ENCODE measurements at regions of chrX and their contacts with region 1.

Region 1: DNA sequence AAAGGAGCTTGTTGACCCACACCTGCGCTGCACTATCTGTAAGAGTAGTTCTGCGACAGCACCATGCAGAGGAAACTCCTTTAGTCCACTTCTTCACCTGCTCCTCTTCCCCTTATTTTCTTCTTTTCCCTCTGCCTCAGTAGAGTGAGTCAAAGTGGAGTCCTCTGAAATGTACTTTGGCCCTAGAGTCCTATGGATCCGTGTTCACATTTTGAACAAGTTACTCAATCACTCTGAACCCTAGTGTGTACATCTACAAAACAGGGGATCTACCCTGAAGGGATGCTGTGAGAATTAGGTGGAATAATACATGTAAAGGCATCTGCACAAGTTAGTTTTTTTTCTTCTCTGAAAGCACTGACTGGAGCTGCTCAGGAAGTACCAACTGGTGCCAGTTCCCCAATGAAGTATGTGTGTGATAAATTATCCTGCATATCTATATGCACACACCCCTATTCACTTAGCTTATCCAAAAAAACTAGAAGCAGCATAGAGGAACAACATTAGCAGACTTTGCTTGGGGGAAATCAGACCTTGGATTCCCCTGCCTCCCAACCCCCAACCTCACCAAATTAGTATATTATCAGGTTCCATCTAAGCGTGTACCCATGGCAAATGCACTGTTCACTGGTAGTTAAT is 118.5 kb upstream of the FAM9C start:
- DNase-seq: no peak
- H3K4me3 ChIP-seq: no peak overlapping the region
- H3K27ac ChIP-seq: no peak overlapping the region
- H3K4me1 ChIP-seq: peaks cover 7% of the 10 kb centered on the region
- H3K27me3 ChIP-seq: no peaks in the 10 kb centered on the region
- CTCF ChIP-seq: no peak
- EP300 ChIP-seq: no peak
- POLR2A ChIP-seq: no peak

Region 2: DNA sequence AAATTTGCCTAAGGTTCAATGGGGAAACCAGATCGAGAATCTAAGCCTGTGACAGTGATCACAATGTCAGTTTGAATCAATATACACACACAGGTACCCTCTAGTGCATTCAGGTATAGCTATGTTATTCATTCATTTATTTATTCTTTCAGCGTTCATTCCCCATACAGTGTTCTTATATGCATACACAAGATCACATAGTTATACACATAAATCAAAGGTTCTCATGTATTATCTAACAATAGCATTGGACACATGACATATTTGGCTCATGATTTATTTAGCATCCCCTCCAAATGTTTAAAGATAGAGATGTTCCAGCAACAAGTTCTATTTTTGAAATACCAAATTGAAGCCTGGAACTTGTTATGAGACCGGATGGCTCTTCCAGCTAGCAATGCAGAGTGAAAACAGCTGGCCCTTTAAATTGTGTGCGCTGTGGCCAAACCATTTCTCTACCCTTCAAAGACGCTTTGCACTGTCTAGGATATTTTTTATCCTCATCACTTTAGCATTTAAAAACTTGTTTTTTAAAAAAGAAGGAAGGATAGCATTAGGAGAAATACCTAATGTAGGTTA is 25.9 kb after region 1 on chrX:
- intact Hi-C with region 1: loop called in 1 of 4 experiments (anchors 1 kb)
- DNase-seq: no peak
- H3K4me3 ChIP-seq: no peak overlapping the region
- H3K27ac ChIP-seq: no peak overlapping the region
- H3K4me1 ChIP-seq: no peaks in the 10 kb centered on the region
- H3K27me3 ChIP-seq: no peaks in the 10 kb centered on the region
- CTCF ChIP-seq: no peak
- EP300 ChIP-seq: no peak
- POLR2A ChIP-seq: no peak

Region 3: DNA sequence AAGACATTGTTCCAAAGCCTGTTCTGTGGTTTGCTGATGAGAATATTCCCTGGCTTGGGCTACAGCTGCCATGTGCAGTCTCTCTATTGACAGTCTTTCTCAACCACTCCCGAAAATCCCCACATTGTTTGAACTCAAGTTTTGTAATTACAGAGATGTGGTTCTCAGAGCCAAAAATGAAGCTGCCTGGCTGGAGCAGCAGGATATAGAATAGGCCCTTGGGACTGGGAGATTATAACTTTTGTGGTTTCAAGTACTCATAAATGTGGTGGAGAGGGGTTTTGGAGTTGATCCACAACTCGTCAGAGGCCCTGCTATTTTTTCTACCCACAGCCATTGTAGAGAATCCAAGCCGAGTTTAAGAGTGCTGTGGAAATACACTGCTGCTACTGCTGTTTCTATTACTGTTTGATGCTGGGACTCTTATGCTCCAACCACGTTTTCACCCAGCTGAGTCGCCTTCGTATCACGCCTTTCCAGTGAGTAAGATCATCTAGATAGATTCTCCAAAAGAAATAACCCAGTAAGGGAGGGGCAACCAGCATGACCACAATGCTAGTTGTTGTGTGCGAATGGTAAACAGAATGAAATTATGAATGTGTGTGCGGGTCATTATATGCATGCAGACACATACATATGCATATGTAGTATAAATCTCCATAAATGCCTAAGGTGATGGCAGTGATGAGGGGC is 214.1 kb after region 1 on chrX:
- intact Hi-C with region 1: no loop called
- DNase-seq: no peak
- H3K4me3 ChIP-seq: no peak overlapping the region
- H3K27ac ChIP-seq: no peak overlapping the region
- H3K4me1 ChIP-seq: peaks cover 3% of the 10 kb centered on the region
- H3K27me3 ChIP-seq: no peaks in the 10 kb centered on the region
- CTCF ChIP-seq: no peak
- EP300 ChIP-seq: no peak
- POLR2A ChIP-seq: no peak

Region 4: GRCh38 chrX:14427614-14428013 is 1264.7 kb after region 1 on chrX:
- intact Hi-C with region 1: no loop called
- DNase-seq: no peak
- H3K4me3 ChIP-seq: no peak overlapping the region
- H3K27ac ChIP-seq: no peak overlapping the region
- H3K4me1 ChIP-seq: no peaks in the 10 kb centered on the region
- H3K27me3 ChIP-seq: no peaks in the 10 kb centered on the region
- CTCF ChIP-seq: no peak
- EP300 ChIP-seq: no peak
- POLR2A ChIP-seq: no peak

Measured in ovary (tissue), 10 donors.